PC-3 (cell line): ENCODE measurements at regions of chr16 and their contacts with region 1.

Region 1: GRCh38 chr16:67040906-67041305 is 12.0 kb downstream of the CBFB start:
- DNase-seq: no peak
- ATAC-seq: no peak
- H3K4me3 ChIP-seq: no peak overlapping the region
- H3K27ac ChIP-seq: no peak overlapping the region
- H3K4me1 ChIP-seq: no peaks in the 10 kb centered on the region
- H3K27me3 ChIP-seq: no peaks in the 10 kb centered on the region
- CTCF ChIP-seq: no peak

Region 2: GRCh38 chr16:67091906-67092566 is 51.1 kb after region 1 on chr16:
- CTCF ChIA-PET with region 1: no interaction called
- POLR2A ChIA-PET with region 1: no interaction called
- intact Hi-C with region 1: loop called (anchors 5 kb)
- DNase-seq: no peak
- ATAC-seq: no peak
- H3K4me3 ChIP-seq: no peak overlapping the region
- H3K27ac ChIP-seq: no peak overlapping the region
- H3K4me1 ChIP-seq: no peaks in the 10 kb centered on the region
- H3K27me3 ChIP-seq: no peaks in the 10 kb centered on the region
- CTCF ChIP-seq: no peak